ENCODE measurements at regions of chr1 and their contacts with region 1.

Region 1: GRCh38 chr1:23664837-23665795 is 26.5 kb upstream of the RPL11 start:
- DNase-seq: no peak
- H3K4me3 ChIP-seq: no peak overlapping the region
- H3K27me3 ChIP-seq: no peaks in the 10 kb centered on the region
- CTCF ChIP-seq: peak; percentile 47

Region 2: DNA sequence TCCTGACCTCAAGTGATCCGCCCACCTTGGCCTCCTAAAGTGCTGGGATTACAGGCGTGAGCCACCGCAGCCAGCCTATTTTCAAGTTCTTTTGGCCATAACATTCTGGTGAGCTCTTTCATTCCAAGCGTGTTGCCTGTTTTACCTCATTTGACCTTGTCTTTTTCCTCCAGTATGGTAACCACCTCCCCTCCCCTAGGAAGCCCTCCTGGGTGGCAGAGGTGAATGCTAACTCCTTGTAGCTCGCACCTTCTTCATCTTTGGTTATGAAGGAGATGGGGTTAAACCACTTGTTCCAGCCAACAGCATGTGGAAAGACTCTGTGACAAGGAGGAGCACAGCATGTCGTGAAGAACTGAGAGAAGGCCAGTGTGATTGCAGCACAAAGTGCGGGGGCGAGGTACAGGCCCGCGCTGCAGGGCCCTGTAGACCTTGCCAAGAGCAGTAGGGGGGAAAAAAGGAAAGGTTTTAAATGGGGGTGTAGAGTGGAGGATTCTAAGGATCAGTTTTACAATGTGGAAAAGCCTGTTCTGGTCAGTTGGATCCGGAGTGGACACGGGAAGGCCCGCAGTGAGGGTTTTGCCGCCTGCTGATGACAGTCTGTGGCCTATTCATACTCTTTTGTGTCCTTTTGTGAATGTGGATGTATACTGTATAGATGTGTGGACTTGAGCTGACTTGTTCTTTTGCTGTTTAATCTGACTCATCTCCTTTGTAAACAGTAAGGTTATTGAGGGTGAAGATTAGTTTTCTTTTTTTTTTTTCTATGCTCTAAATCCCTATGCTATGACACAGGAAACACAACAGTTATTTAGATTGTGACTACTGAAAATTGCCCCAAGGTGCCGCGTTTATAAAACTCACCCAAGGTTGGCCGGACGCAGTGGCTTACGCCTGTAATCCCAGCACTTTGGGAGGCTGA is 288.0 kb before region 1 on chr1:
- CTCF ChIA-PET with region 1: no interaction called
- POLR2A ChIA-PET with region 1: no interaction called
- DNase-seq: peak; percentile 79
- H3K4me3 ChIP-seq: no peak overlapping the region
- H3K27me3 ChIP-seq: no peaks in the 10 kb centered on the region
- CTCF ChIP-seq: no peak

Region 3: DNA sequence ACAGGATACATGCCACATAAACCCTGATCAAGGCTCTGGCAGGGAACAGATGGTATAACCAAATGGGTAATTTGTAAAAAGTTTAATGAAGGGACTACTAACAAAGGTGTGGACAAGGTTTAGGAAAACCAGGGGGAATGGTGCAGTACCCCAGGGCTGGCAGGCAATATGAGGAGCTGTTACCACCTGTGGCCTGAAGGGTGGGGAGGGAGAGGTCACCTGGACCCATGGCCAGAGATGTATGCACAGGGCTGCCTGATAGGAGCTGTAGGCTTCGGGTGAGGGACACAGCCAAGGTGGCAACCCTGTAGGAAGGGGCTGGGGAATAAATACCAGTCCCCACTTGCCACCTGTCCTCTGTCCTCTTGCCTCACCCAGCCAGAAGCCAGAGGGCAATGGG is 54.4 kb before region 1 on chr1:
- CTCF ChIA-PET with region 1: no interaction called
- POLR2A ChIA-PET with region 1: no interaction called
- DNase-seq: no peak
- H3K4me3 ChIP-seq: no peak overlapping the region
- H3K27me3 ChIP-seq: no peaks in the 10 kb centered on the region; the same call in 1 of the 2 replicates
- CTCF ChIP-seq: no peak

Region 4: DNA sequence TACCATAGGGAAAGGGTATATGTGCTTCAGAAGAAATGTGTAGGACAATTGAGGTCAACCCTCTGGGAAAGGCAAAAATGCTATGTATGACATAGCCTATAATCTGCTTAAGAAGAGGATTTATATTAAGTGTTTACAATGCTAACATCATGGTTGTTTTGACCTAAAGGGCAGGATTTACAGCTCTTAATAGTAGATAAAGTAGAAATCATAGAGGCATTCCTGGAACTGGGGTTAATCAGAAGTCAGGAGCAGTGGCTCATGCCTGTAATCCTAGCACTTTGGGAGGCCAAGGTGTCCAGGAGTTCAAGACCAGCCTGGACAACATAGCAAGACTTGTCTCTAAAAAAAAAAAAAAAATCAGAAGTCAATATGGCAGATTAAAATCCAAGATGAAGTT is 17.8 kb after region 1 on chr1:
- CTCF ChIA-PET with region 1: interaction called, 11 read pairs
- POLR2A ChIA-PET with region 1: interaction called, 4 read pairs
- DNase-seq: no peak
- H3K4me3 ChIP-seq: no peak overlapping the region
- H3K27me3 ChIP-seq: peaks cover 8% of the 10 kb centered on the region
- CTCF ChIP-seq: no peak

Measured in BJ (cell line).